ENCODE measurements at regions of chr14 and their contacts with region 1.

Region 1: DNA sequence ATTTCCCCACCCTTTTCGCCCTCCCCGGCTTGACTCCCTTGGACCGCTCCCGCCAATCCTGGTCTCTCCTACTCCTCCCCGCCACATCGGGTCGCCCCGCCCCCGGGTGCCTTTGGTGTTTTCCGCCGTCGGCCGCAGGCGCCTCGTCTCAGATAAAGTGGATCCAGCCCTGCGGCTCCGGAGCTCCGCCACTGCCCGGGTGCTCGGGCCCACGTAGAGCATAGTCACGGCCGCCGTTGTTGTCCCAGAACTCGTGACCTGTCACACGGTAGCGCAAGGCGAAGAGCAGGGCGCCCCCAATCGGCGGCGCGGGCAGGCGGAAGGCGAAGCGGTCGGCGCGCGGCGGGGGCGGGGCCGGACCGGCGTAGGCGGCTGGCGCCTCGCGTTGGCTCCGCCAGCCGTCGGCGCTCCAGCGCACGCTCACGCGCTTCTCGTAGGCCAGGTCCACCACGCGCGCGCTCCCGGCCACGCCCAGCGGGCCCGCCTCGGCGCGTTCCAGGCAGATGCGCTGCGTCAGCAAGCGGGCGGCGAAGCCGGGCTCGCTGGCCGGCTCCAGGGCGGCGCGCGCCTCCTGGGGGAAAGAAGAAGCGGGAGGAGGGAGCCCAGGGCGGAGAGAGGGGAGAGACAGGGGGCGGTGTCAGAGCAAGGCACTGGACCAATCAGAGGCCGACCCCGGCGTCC is 1.2 kb downstream of the PPP1R3E start:
- DNase-seq: peak; percentile 99
- H3K4me3 Mint-ChIP-seq: peak overlapping the region; percentile 91
- H3K27ac Mint-ChIP-seq: peak overlapping the region; percentile 97
- H3K4me1 Mint-ChIP-seq: peaks cover 29% of the 10 kb centered on the region
- H3K27me3 Mint-ChIP-seq: no peaks in the 10 kb centered on the region

Region 2: GRCh38 chr14:22980672-22981089 is 320.7 kb before region 1 on chr14:
- intact Hi-C with region 1: loop called (anchors 1 kb)
- DNase-seq: no peak
- H3K4me3 Mint-ChIP-seq: peak overlapping the region; percentile 31
- H3K27ac Mint-ChIP-seq: no peak overlapping the region
- H3K4me1 Mint-ChIP-seq: peaks cover 9% of the 10 kb centered on the region
- H3K27me3 Mint-ChIP-seq: peaks cover 29% of the 10 kb centered on the region

Region 3: GRCh38 chr14:23120541-23121251 is 180.7 kb before region 1 on chr14:
- intact Hi-C with region 1: loop called (anchors 1 kb)
- DNase-seq: peak; percentile 73
- H3K4me3 Mint-ChIP-seq: peak overlapping the region; percentile 38
- H3K27ac Mint-ChIP-seq: peak overlapping the region; percentile 90
- H3K4me1 Mint-ChIP-seq: peaks cover 31% of the 10 kb centered on the region
- H3K27me3 Mint-ChIP-seq: peaks cover 10% of the 10 kb centered on the region

Region 4: DNA sequence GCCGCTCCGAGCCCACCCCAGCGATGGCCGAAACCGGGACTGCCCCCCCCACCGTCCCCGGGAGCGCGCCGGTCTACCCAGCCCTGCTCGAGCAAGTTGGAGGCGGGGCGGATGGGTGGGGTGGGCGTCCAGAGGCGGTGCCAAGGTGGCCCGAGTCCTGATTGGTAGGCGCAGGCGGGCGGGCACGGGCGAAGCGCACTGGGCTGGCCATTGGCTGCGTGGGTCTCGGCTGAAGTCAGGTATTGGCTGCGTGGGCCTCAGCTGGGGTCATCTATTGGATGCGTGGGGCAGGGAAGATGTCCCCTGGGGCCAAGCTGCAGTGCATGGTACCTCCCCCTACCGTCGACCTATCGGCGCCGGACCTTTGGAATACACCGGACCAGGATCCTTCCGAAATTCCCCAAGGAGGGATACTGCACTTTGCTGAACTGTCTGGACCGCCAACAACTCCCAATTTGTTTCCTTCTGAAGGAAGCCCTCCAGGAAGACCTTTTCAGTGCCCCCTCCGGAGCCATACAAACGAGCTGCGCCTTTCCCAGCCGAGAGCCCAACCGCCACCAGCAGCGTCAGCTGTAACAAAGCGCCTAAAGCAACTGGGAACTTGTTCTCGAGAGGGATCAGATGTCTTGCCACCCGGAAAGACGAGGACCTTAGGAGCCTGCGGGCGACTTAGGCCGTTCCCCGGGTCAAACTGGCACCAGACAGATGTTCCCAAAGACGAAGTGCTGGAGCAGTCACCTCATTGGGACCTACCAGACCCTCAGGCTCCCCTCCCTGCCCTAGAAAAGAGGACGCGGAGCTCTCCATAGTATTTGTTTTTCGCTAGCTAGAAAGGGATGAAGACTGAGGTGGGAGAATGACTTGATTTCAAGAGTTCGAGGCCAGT is 15.2 kb before region 1 on chr14 and contains the start of gene HOMEZ:
- intact Hi-C with region 1: loop called (anchors 1 kb)
- DNase-seq: peak; percentile 98
- H3K4me3 Mint-ChIP-seq: peak within 1 kb of the TSS; percentile 99
- H3K27ac Mint-ChIP-seq: peak within 1 kb of the TSS; percentile 95
- H3K4me1 Mint-ChIP-seq: peaks cover 26% of the 10 kb centered on the region
- H3K27me3 Mint-ChIP-seq: no peaks in the 10 kb centered on the region
- total RNA-seq, gene HOMEZ: 10.9 and 12.2 TPM in 2 replicates

Region 5: GRCh38 chr14:23327947-23328744 is 26.7 kb after region 1 on chr14:
- intact Hi-C with region 1: no loop called
- DNase-seq: peak; percentile 47
- H3K4me3 Mint-ChIP-seq: no peak overlapping the region
- H3K27ac Mint-ChIP-seq: no peak overlapping the region
- H3K4me1 Mint-ChIP-seq: peaks cover 4% of the 10 kb centered on the region
- H3K27me3 Mint-ChIP-seq: peaks cover under 1% of the 10 kb centered on the region

Region 6: GRCh38 chr14:23555882-23556699 is 254.7 kb after region 1 on chr14 and contains the start of gene THTPA:
- intact Hi-C with region 1: loop called (anchors 2 kb)
- DNase-seq: peak; percentile 88
- H3K4me3 Mint-ChIP-seq: peak within 1 kb of the TSS; percentile 97
- H3K27ac Mint-ChIP-seq: peak within 1 kb of the TSS; percentile 97
- H3K4me1 Mint-ChIP-seq: peaks cover 31% of the 10 kb centered on the region
- H3K27me3 Mint-ChIP-seq: no peaks in the 10 kb centered on the region
- total RNA-seq, gene THTPA: 14.3 and 14.5 TPM in 2 replicates

Region 7: GRCh38 chr14:23588884-23589598 is 287.6 kb after region 1 on chr14:
- intact Hi-C with region 1: no loop called
- DNase-seq: peak; percentile 41
- H3K4me3 Mint-ChIP-seq: no peak overlapping the region
- H3K27ac Mint-ChIP-seq: no peak overlapping the region
- H3K4me1 Mint-ChIP-seq: no peaks in the 10 kb centered on the region
- H3K27me3 Mint-ChIP-seq: peaks cover 9% of the 10 kb centered on the region